ENCODE measurements at regions of chr1 and their contacts with region 1.

Region 1: GRCh38 chr1:181105134-181106021 is 16.9 kb downstream of the IER5 start:
- H3K4me3 ChIP-seq: peak overlapping the region; percentile 57
- H3K27ac ChIP-seq: peak overlapping the region; percentile 89
- H3K4me1 ChIP-seq: peaks cover 31% of the 10 kb centered on the region; the same call in 1 of the 2 replicates
- CTCF ChIP-seq: 0 out of 2 replicates have a peak, but pooled peaks have one; percentile 11

Region 2: DNA sequence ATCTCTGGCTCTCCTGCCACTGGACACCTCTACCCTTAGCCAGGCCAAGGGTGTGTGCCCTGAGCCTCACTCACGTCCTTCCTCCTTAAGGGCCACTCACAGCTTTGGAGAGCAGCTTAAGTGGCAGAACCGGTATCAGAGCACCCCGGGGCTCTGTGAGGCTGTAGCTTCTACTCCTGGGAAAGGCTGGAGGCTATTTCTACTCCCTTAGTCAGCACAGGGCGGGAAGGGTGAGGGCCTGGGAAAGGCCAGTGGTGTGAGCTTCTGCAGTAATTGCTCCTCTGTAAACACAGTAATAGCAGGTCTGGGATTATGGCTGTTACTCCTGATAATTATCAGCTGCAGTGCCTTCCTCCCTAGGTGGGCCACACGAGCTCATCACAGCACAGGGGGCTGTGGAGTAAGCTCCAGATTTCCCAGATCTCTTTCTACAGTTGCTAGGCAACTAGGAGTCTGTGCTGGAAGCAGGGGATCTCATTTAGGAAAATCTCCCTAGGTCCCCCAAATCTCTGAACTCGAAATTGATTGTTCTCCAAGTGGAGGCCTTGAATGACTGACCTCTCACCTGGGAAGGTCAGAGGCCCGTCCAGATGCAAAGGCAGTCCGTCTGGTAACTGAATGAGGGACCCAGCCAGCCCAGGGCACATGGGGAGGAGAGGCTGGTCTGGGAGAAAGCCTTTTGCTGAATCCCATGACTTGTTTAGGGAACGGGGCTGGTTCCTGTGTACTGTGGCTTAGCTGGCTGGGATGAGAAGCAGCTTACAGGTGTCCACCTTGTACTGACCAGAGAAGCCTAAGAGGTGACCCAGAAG is 12.5 kb after region 1 on chr1:
- CTCF ChIA-PET with region 1: interaction called, 4 read pairs
- POLR2A ChIA-PET with region 1: interaction called, 27 read pairs
- H3K4me3 ChIP-seq: no peak overlapping the region
- H3K27ac ChIP-seq: peak overlapping the region; percentile 27; the same call in 1 of the 2 replicates
- H3K4me1 ChIP-seq: peaks cover 5% of the 10 kb centered on the region; the same call in 1 of the 2 replicates
- CTCF ChIP-seq: no peak

Region 3: GRCh38 chr1:181128592-181129497 is 23.5 kb after region 1 on chr1:
- CTCF ChIA-PET with region 1: interaction called, 3 read pairs
- POLR2A ChIA-PET with region 1: interaction called, 25 read pairs
- H3K4me3 ChIP-seq: no peak overlapping the region
- H3K27ac ChIP-seq: no peak overlapping the region
- H3K4me1 ChIP-seq: peaks cover 3% of the 10 kb centered on the region; the same call in 1 of the 2 replicates
- CTCF ChIP-seq: no peak

Region 4: DNA sequence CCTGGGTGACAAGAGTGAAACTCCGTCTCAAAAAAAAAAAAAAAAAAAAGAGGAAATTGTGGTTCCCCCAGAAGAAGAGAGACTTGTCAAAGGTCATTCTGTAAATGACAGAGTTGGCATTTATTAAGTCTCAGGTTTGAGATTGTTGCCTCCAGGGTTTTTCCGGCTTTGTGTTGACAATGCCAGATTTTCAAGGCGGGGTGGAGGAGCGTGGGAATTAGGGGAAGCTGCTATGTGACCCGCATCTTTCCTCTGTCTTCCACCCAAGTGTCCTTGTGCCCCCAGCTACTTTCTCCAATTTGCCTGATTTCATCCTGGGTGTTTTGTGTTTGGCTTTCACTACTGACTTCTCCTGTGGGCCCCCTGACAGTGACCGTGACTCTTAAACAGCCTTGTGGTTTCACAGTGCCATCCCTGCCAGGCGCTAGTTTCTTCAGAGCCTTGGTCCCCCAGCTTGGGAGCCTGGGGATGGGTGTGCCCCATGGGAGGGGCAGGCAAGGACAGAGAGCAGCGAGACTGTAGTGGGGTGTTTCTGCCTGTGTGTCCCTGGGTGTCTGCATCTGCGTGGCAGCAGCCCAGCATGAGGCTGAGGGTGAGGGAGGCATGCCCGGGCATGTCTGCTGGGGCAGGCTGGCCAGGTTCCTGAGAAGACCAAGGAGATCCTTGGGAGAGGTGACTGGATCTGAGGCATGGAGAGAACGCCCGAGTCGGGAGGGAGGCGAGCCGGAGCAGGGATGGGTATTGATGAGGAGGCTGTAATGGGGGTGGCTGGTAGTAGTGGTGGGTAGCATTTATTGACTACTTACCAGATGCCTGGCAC is 29.4 kb after region 1 on chr1:
- CTCF ChIA-PET with region 1: interaction called, 69 read pairs
- POLR2A ChIA-PET with region 1: interaction called, 17 read pairs
- H3K4me3 ChIP-seq: no peak overlapping the region
- H3K27ac ChIP-seq: peak overlapping the region; percentile 94
- H3K4me1 ChIP-seq: peaks cover 9% of the 10 kb centered on the region
- CTCF ChIP-seq: no peak